GM13977 (cell line): ENCODE measurements at regions of chr1 and their contacts with region 1.

Region 1: GRCh38 chr1:171251042-171251951 is 3.0 kb downstream of the FMO1 start:
- DNase-seq: no peak
- CTCF ChIP-seq: peak; percentile 55

Region 2: GRCh38 chr1:171127501-171127900 is 123.8 kb before region 1 on chr1:
- in situ Hi-C with region 1: no loop called
- DNase-seq: no peak
- CTCF ChIP-seq: no peak

Region 3: GRCh38 chr1:171300401-171300800 is 49.1 kb after region 1 on chr1:
- in situ Hi-C with region 1: loop called (anchors 10 kb)
- DNase-seq: no peak
- CTCF ChIP-seq: no peak

Region 4: GRCh38 chr1:171446386-171446785 is 195.1 kb after region 1 on chr1:
- in situ Hi-C with region 1: no loop called
- DNase-seq: no peak
- CTCF ChIP-seq: no peak